ENCODE measurements at regions of chr4 and their contacts with region 1.

Region 1: GRCh38 chr4:33722800-33723516 is 2521.4 kb downstream of the ARAP2 start:
- DNase-seq: no peak
- H3K4me3 ChIP-seq: no peak overlapping the region
- H3K27ac ChIP-seq: no peak overlapping the region
- H3K4me1 ChIP-seq: no peaks in the 10 kb centered on the region
- H3K27me3 ChIP-seq: no peaks in the 10 kb centered on the region
- CTCF ChIP-seq: no peak
- POLR2A ChIP-seq: no peak

Region 2: GRCh38 chr4:33685939-33686338 is 37.0 kb before region 1 on chr4:
- intact Hi-C with region 1: loop called (anchors 2 kb)
- DNase-seq: no peak
- H3K4me3 ChIP-seq: no peak overlapping the region
- H3K27ac ChIP-seq: no peak overlapping the region
- H3K4me1 ChIP-seq: no peaks in the 10 kb centered on the region
- H3K27me3 ChIP-seq: no peaks in the 10 kb centered on the region
- CTCF ChIP-seq: no peak
- POLR2A ChIP-seq: no peak